ENCODE measurements at regions of chr3 and their contacts with region 1.

Region 1: GRCh38 chr3:196207833-196208607 is 3.2 kb downstream of the ZDHHC19 start:
- DNase-seq: no peak
- H3K4me3 Mint-ChIP-seq: peak overlapping the region; percentile 58
- H3K27ac Mint-ChIP-seq: no peak overlapping the region
- H3K4me1 Mint-ChIP-seq: no peaks in the 10 kb centered on the region
- H3K27me3 Mint-ChIP-seq: peaks cover 31% of the 10 kb centered on the region
- CTCF ChIP-seq: no peak

Region 2: GRCh38 chr3:196518966-196519717 is 311.1 kb after region 1 on chr3:
- CTCF ChIA-PET with region 1: no interaction called
- POLR2A ChIA-PET with region 1: no interaction called
- intact Hi-C with region 1: loop called (anchors 5 kb)
- DNase-seq: peak; percentile 82
- H3K4me3 Mint-ChIP-seq: no peak overlapping the region
- H3K27ac Mint-ChIP-seq: no peak overlapping the region
- H3K4me1 Mint-ChIP-seq: no peaks in the 10 kb centered on the region
- H3K27me3 Mint-ChIP-seq: no peaks in the 10 kb centered on the region
- CTCF ChIP-seq: peak; percentile 65